ENCODE measurements at regions of chr2 and their contacts with region 1.

Region 1: GRCh38 chr2:60422826-60423483 is 130.5 kb downstream of the BCL11A start:
- DNase-seq: no peak
- ATAC-seq: no peak
- H3K4me3 Mint-ChIP-seq: no peak overlapping the region
- H3K27ac Mint-ChIP-seq: no peak overlapping the region
- H3K4me1 Mint-ChIP-seq: no peaks in the 10 kb centered on the region
- H3K27me3 Mint-ChIP-seq: no peaks in the 10 kb centered on the region

Region 2: DNA sequence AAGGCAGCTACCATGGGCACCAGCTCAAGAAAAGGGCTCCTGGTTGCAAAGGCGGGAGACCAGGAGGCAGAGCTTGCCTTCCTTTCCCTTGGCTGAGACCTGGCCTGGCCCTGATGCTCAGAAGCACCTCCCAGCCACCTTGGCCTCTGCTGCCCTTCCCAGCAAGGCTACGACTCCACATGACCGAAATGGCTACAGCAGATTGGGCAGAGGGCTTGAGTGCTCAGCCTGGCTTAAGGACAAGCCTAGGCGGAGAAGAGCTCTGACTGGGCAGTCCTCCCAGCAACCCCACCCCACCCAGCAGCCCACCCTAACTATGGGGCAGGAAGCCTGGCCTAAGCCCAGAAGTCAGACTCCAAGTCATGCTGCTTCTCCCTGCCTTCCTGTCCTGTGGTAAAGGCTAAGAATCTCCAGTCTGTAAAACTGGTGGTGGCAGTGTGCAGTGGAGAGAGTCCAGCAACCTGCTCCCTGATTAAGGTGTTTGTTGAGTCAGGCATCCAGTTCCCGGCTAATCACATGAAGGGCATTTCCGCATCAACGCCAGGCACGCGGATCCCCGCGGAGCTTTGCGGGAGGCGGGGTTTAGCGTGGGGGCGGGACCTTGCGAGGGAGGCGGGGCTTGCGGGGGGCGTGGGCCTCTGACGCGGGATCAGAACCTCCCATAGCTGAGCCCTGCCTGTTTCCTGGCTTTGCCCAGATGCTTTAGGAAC is 125.5 kb before region 1 on chr2:
- CTCF ChIA-PET with region 1: no interaction called
- POLR2A ChIA-PET with region 1: interaction called, 10 read pairs
- intact Hi-C with region 1: no loop called
- DNase-seq: no peak
- ATAC-seq: no peak
- H3K4me3 Mint-ChIP-seq: no peak overlapping the region
- H3K27ac Mint-ChIP-seq: no peak overlapping the region
- H3K4me1 Mint-ChIP-seq: no peaks in the 10 kb centered on the region
- H3K27me3 Mint-ChIP-seq: no peaks in the 10 kb centered on the region

Measured in activated CD4-positive, alpha-beta T cell treated with anti-CD3 and anti-CD28 coated beads for 36 hours (primary cell).